ENCODE measurements at regions of chr15 and their contacts with region 1.

Region 1: GRCh38 chr15:71752604-71753289 is 57.6 kb upstream of the NR2E3 start:
- DNase-seq: peak; percentile 82
- H3K4me3 ChIP-seq: no peak overlapping the region
- H3K27ac ChIP-seq: no peak overlapping the region
- H3K4me1 ChIP-seq: no peaks in the 10 kb centered on the region
- H3K27me3 ChIP-seq: no peaks in the 10 kb centered on the region
- CTCF ChIP-seq: peak; percentile 72

Region 2: GRCh38 chr15:71780115-71780976 is 27.6 kb after region 1 on chr15:
- CTCF ChIA-PET with region 1: interaction called, 16 read pairs
- POLR2A ChIA-PET with region 1: no interaction called
- intact Hi-C with region 1: no loop called
- DNase-seq: peak; percentile 69
- H3K4me3 ChIP-seq: no peak overlapping the region
- H3K27ac ChIP-seq: no peak overlapping the region
- H3K4me1 ChIP-seq: no peaks in the 10 kb centered on the region
- H3K27me3 ChIP-seq: no peaks in the 10 kb centered on the region
- CTCF ChIP-seq: peak; percentile 93